Activated T-helper 1 cell treated with anti-CD3 and anti-CD28 coated beads, Interleukin-12 subunit alpha, Interleukin-12 subunit beta, Interleukin-2, Interleukin-4 antibody, amounts not matched to agents 30 ng/mL and 10 ng/mL and 1 ng/mL, durations not matched to agents 14 hours and 24 hours and 36 hours (primary cell): ENCODE measurements at regions of chr2 and their contacts with region 1.

Region 1: GRCh38 chr2:181305301-181306123 is 151.7 kb upstream of the ITGA4 start:
- DNase-seq: peak; percentile 62
- H3K4me3 Mint-ChIP-seq: peak overlapping the region; percentile 74
- H3K27ac Mint-ChIP-seq: peak overlapping the region; percentile 96
- H3K4me1 Mint-ChIP-seq: peaks cover 84% of the 10 kb centered on the region
- H3K27me3 Mint-ChIP-seq: no peaks in the 10 kb centered on the region

Region 2: DNA sequence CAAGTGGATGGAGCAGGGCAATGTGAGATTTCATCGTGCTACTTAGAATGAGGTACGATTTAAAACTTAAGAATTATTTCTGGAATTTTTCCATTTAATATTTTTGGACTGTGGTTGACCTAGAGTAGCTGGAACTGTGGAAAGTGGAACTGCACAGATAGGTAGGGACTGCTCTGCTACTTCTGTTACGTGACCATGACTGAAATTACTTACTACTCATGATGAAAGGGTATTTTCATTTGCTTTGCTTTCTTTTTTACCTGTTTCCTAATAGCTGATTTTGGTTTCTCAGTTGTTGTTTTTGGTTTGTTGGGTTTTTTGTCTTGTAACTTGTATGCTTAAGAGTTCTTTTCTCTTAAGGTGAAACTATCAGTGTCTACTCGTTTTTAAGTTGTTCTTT is 313.7 kb before region 1 on chr2:
- intact Hi-C with region 1: no loop called
- DNase-seq: no peak
- H3K4me3 Mint-ChIP-seq: no peak overlapping the region
- H3K27ac Mint-ChIP-seq: no peak overlapping the region
- H3K4me1 Mint-ChIP-seq: peaks cover 18% of the 10 kb centered on the region
- H3K27me3 Mint-ChIP-seq: no peaks in the 10 kb centered on the region

Region 3: GRCh38 chr2:181178823-181179412 is 126.6 kb before region 1 on chr2:
- intact Hi-C with region 1: loop called (anchors 5 kb)
- DNase-seq: no peak
- H3K4me3 Mint-ChIP-seq: peak overlapping the region; percentile 7
- H3K27ac Mint-ChIP-seq: peak overlapping the region; percentile 57
- H3K4me1 Mint-ChIP-seq: peaks cover 56% of the 10 kb centered on the region
- H3K27me3 Mint-ChIP-seq: no peaks in the 10 kb centered on the region

Region 4: GRCh38 chr2:181223234-181223633 is 82.3 kb before region 1 on chr2:
- intact Hi-C with region 1: loop called (anchors 2 kb)
- DNase-seq: no peak
- H3K4me3 Mint-ChIP-seq: peak overlapping the region; percentile 34
- H3K27ac Mint-ChIP-seq: peak overlapping the region; percentile 93
- H3K4me1 Mint-ChIP-seq: peaks cover 31% of the 10 kb centered on the region
- H3K27me3 Mint-ChIP-seq: no peaks in the 10 kb centered on the region

Region 5: GRCh38 chr2:181289698-181290097 is 15.8 kb before region 1 on chr2:
- intact Hi-C with region 1: loop called (anchors 1 kb)
- DNase-seq: no peak
- H3K4me3 Mint-ChIP-seq: no peak overlapping the region
- H3K27ac Mint-ChIP-seq: no peak overlapping the region
- H3K4me1 Mint-ChIP-seq: peaks cover 6% of the 10 kb centered on the region
- H3K27me3 Mint-ChIP-seq: no peaks in the 10 kb centered on the region

Region 6: GRCh38 chr2:181715033-181715630 is 409.6 kb after region 1 on chr2:
- intact Hi-C with region 1: loop called (anchors 10 kb)
- DNase-seq: peak; percentile 45
- H3K4me3 Mint-ChIP-seq: no peak overlapping the region
- H3K27ac Mint-ChIP-seq: no peak overlapping the region
- H3K4me1 Mint-ChIP-seq: no peaks in the 10 kb centered on the region
- H3K27me3 Mint-ChIP-seq: peaks cover 5% of the 10 kb centered on the region

Region 7: DNA sequence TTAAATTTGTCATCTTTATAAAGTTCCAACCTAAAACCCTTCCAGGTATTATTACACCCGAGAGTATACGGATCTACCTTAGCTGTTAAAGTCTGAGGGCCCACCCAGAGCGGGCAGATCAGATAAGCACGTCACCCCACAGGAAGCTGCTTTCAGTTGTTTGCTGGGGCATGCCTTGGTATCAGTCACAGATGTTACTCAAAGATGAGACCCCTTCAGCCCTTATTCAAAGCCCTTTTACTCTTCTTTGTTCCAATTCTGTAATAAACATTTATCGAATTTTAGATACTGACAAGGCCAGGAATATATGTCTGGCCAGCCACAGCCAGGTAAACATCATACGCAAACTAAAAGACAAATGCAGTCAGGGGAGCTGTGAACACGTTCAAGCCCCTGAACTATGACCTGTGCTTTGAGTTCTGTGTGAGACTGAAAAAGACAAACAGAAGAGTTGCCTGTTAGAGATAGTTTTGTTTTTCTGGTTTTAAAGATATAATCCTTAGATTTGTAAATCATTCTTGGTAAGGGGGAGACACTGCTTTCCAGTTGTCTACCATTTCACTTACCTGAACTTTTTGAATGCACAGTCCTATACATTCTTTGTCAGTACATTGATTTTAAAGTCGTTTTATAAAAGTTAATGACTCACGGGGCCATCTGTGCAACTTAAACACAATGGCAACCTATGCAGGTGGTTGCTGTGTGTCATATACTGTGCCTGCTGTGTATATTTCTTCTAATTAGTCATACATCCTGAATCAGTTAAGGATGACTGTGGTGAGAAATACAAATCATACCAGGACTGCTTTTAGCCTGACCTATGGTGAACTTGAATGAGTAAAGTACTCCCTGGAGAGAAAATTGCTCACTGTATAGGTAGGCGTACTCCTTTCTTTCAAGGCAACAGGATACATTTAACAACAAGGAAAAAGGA is 485.5 kb after region 1 on chr2:
- intact Hi-C with region 1: loop called (anchors 10 kb)
- DNase-seq: peak; percentile 3
- H3K4me3 Mint-ChIP-seq: no peak overlapping the region
- H3K27ac Mint-ChIP-seq: peak overlapping the region; percentile 38
- H3K4me1 Mint-ChIP-seq: peaks cover 33% of the 10 kb centered on the region
- H3K27me3 Mint-ChIP-seq: no peaks in the 10 kb centered on the region